Left ventricle myocardium superior (tissue), 1 donor: ENCODE measurements at regions of chr1 and their contacts with region 1.

Region 1: GRCh38 chr1:28409090-28409489 is 39.5 kb downstream of the PHACTR4 start:
- DNase-seq: no peak
- ATAC-seq: no peak

Region 2: GRCh38 chr1:28160782-28161266 is 248.3 kb before region 1 on chr1:
- intact Hi-C with region 1: no loop called
- DNase-seq: no peak
- ATAC-seq: peak; percentile 74

Region 3: GRCh38 chr1:28470146-28470545 is 61.1 kb after region 1 on chr1:
- intact Hi-C with region 1: loop called (anchors 10 kb)
- DNase-seq: no peak
- ATAC-seq: no peak